Gastrocnemius medialis (tissue), 4 donors: ENCODE measurements at regions of chr2 and their contacts with region 1.

Region 1: GRCh38 chr2:206159346-206160124 is at the starts of genes EEF1B2 and NDUFS1:
- DNase-seq: peak; percentile 97
- ATAC-seq: peak; percentile 91 to 93
- H3K4me3 ChIP-seq: peak within 1 kb of the TSS; percentile 70 to 95 (median 90)
- H3K27ac ChIP-seq: peak within 1 kb of the TSS; percentile 92 to 97 (median 96)
- H3K4me1 ChIP-seq: peaks cover 35 to 51% of the 10 kb centered on the region in 2 donors
- H3K27me3 ChIP-seq: no peaks in the 10 kb centered on the region
- CTCF ChIP-seq: no peak
- POLR2A ChIP-seq: peak; percentile 62 to 80
- total RNA-seq, gene EEF1B2: 370 to 590 (median 448) TPM
- total RNA-seq, gene NDUFS1: 253 to 385 (median 275) TPM

Region 2: DNA sequence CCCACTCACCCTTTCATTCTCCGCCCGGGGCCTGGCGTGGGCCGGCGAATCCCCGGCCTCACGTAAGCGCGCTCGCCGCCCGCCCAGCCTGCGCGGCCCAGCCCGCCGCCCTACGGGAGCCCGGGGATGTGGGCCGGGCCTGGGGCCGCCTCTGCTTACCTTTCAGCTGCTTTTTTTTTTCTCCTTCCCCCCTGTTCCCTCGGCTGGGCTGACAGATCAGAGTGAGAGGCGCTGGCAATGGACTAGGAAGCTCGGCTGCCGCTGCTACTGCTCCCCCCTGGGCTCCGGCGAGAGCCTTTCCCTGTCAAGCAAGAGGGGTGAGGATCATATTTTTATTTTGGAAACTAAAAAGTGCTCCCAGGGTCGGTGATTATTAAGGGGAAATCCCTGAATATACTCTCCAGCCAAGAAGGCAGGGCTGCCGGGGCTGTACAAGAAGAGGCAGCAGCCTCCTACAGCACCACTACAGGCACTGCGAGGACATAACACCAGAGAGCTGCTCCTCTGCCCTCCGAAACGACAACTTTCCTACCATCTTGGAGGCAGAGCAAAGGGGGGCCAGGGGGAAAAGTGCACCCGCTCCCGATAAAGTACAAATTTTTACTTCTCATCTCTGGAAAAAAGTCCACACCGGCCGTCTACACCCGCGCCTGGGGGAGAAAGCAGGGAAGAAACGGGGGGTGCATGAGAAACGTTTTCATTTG is 73.6 kb before region 1 on chr2 and contains the start of gene INO80D:
- in situ Hi-C with region 1: loop called in 1 of 4 experiments (anchors 10 kb)
- intact Hi-C with region 1: loop called (anchors 2 kb)
- DNase-seq: peak; percentile 59 to 80
- ATAC-seq: peak; percentile 83 to 85
- H3K4me3 ChIP-seq: peak within 1 kb of the TSS; percentile 79 to 91 (median 90)
- H3K27ac ChIP-seq: peak within 1 kb of the TSS; percentile 94 to 99 (median 97)
- H3K4me1 ChIP-seq: peaks cover 11 to 19% of the 10 kb centered on the region in 2 donors
- H3K27me3 ChIP-seq: no peaks in the 10 kb centered on the region
- CTCF ChIP-seq: peak; percentile 14 to 77 (median 52)
- POLR2A ChIP-seq: peak; percentile 52 to 68
- total RNA-seq, gene INO80D: 11.3 to 16.9 (median 14.6) TPM

Region 3: GRCh38 chr2:206274434-206275268 is 115.1 kb after region 1 on chr2 and contains the start of gene ZDBF2:
- in situ Hi-C with region 1: loop called in 1 of 4 experiments (anchors 10 kb)
- intact Hi-C with region 1: loop called (anchors 2 kb)
- DNase-seq: peak; percentile 12 to 24
- ATAC-seq: peak; percentile 87 to 91
- H3K4me3 ChIP-seq: peak within 1 kb of the TSS; percentile 71 to 83 (median 76)
- H3K27ac ChIP-seq: peak within 1 kb of the TSS; percentile 81 to 85 (median 82)
- H3K4me1 ChIP-seq: peaks cover 4 to 21% of the 10 kb centered on the region in 2 donors
- H3K27me3 ChIP-seq: peaks cover 48 to 60% (median 55%) of the 10 kb centered on the region in 3 donors
- CTCF ChIP-seq: no peak
- POLR2A ChIP-seq: peak in 1 of 2 donors; percentile 43
- total RNA-seq, gene ZDBF2: 5.8 to 13.2 (median 9.5) TPM

Region 4: GRCh38 chr2:206442833-206443734 is 283.5 kb after region 1 on chr2 and contains the start of gene ADAM23:
- in situ Hi-C with region 1: no loop called
- intact Hi-C with region 1: loop called (anchors 5 kb)
- DNase-seq: peak in 1 of 2 donors; percentile 16
- ATAC-seq: peak; percentile 65 to 73
- H3K4me3 ChIP-seq: peak within 1 kb of the TSS; percentile 46 to 65 (median 60)
- H3K27ac ChIP-seq: peak within 1 kb of the TSS in 1 of 4 donors; percentile 14
- H3K4me1 ChIP-seq: peaks cover 8 to 10% of the 10 kb centered on the region in 2 donors
- H3K27me3 ChIP-seq: no peaks in the 10 kb centered on the region
- CTCF ChIP-seq: peak in 1 of 5 experiments; percentile 32
- POLR2A ChIP-seq: peak in 1 of 2 donors; percentile 25
- total RNA-seq, gene ADAM23: 0.65 to 2.4 (median 1.6) TPM